Astrocyte of the cerebellum (primary cell): ENCODE measurements at regions of chr2 and their contacts with region 1.

Region 1: GRCh38 chr2:176056406-176056805 is 27.4 kb downstream of the EVX2 start:
- DNase-seq: no peak
- H3K4me3 ChIP-seq: no peak overlapping the region
- CTCF ChIP-seq: no peak

Region 2: GRCh38 chr2:175690113-175690837 is 366.1 kb before region 1 on chr2:
- in situ Hi-C with region 1: loop called (anchors 25 kb)
- DNase-seq: peak; percentile 71
- H3K4me3 ChIP-seq: no peak overlapping the region
- CTCF ChIP-seq: peak; percentile 69

Region 3: DNA sequence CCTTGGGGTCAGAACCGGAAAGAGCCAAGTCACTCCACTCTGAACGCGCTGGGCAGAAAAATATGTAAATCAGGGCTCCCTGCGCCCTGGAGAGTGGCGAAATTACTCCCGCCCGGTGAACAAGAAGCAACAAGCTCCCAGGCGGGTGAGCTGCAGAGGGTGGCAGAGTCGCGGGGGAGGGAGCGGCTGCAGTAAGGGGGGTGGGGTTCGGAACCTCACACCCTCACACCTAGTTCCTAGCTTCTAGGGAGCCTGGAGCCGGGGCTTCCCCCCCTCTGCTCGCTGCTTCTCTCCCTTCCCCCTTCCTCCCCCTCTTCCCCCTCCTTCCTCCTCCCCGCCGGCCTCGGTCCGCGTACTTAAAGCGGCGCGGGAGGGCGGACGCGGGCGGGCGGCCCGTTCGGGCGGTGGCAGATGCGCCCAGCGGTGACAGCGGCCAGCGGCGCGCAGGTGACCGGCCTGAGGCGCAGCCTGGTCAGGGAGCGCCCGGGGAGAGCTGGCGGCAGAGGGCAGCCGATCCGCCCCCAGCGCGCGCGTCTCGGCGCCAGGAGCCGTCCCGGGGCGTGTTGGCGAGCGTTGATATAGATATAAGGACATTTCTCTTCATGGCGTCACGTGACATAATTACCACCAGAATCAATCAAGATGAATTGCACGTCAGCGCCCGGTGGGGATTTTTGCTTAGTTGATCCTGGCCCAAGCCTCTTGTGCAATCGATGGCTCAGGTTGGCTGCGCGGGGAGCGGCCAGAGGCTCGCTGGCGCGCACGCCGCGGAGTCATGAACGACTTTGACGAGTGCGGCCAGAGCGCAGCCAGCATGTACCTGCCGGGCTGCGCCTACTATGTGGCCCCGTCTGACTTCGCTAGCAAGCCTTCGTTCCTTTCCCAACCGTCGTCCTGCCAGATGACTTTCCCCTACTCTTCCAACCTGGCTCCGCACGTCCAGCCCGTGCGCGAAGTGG is 50.5 kb after region 1 on chr2 and contains the start of gene HOXD11:
- in situ Hi-C with region 1: no loop called
- DNase-seq: no peak
- H3K4me3 ChIP-seq: no peak within 1 kb of the TSS
- CTCF ChIP-seq: no peak